Calu3 (cell line): ENCODE measurements at regions of chr15 and their contacts with region 1.

Region 1: DNA sequence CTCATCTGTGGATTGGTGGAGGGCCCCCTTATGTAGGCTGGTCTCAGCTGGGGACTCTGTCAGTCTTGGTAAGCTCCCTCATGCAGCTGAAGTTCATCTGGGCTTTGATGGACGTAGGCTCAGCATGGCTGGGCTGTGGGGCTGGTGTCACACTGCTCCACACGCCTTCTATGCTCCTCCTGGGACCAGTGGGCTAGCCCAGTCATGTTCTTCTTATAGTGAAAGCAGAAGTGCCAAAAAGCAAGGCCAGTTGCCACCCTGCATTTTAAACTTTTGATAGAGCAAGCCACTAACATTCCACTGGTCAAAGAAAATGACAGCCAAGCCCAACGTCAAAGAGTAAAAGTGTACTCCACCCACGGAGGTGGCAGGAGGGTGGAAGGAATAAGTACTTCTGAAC is 165.5 kb downstream of the MEX3B start:
- DNase-seq: no peak
- H3K4me3 Mint-ChIP-seq: no peak overlapping the region
- H3K27ac Mint-ChIP-seq: no peak overlapping the region
- H3K4me1 Mint-ChIP-seq: no peaks in the 10 kb centered on the region
- H3K27me3 Mint-ChIP-seq: no peaks in the 10 kb centered on the region
- CTCF ChIP-seq: no peak

Region 2: GRCh38 chr15:81596159-81596865 is 284.0 kb before region 1 on chr15:
- CTCF ChIA-PET with region 1: interaction called, 13 read pairs
- intact Hi-C with region 1: no loop called
- DNase-seq: no peak
- H3K4me3 Mint-ChIP-seq: no peak overlapping the region
- H3K27ac Mint-ChIP-seq: no peak overlapping the region
- H3K4me1 Mint-ChIP-seq: no peaks in the 10 kb centered on the region
- H3K27me3 Mint-ChIP-seq: no peaks in the 10 kb centered on the region
- CTCF ChIP-seq: no peak